ENCODE measurements at regions of chr3 and their contacts with region 1.

Region 1: GRCh38 chr3:189961525-189962161 is 159.1 kb downstream of the P3H2 start:
- DNase-seq: peak; percentile 40 to 85 (median 78)
- H3K4me3 ChIP-seq: peak overlapping the region in 1 of 59 donors; percentile 6
- H3K27ac ChIP-seq: peak overlapping the region in 49 of 59 donors; percentile 0 to 90 (median 68)
- H3K27me3 ChIP-seq: no peaks in the 10 kb centered on the region
- CTCF ChIP-seq: peak; percentile 86 to 99 (median 96)

Region 2: DNA sequence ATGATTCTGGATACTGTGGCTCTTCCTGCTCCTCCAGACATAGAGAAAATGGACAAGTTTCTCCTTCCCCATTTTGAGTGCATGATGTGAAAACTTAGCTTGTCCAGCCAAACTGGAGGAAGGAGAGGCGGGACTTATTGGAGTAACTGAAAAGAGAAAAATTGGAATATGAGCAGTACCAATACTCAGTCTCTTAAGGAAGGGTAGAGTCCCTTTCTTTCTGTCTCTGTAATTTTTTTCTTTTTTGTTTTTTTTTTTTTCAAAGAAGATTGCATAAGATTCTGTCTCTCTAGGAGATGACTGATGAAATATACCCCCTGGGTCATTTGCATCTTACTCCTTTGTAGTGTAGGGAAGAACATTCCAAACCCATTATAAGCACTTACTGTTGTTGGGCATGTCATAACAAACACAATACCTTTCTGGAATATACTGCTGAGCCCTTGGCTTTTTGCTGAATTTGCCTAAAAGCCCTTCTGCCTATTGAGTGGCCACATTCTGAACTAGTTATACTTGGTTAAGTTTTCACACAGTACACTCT is 1287.9 kb before region 1 on chr3:
- intact Hi-C with region 1: no loop called
- DNase-seq: no peak
- H3K4me3 ChIP-seq: no peak overlapping the region
- H3K27ac ChIP-seq: no peak overlapping the region
- H3K27me3 ChIP-seq: no peaks in the 10 kb centered on the region
- CTCF ChIP-seq: no peak

Region 3: DNA sequence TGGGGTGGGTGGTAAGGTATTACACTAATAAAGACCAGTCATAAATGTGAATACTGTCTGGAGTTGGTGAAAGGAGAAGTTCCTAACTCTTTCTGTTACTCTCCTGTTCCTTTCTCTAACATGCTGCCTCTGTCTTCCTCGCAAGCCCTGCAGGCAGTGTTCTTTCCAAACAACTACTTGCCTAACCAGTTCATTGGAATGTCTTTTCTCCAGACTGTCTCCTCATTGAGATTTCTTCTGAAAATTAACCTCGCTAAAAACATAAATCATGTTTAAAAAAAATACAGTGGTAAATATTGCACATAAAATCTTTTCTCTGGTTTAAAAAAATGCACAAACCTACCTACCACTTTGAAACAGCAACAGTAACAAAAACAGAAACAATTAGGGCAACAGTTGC is 195.2 kb before region 1 on chr3:
- intact Hi-C with region 1: no loop called
- DNase-seq: no peak
- H3K4me3 ChIP-seq: no peak overlapping the region
- H3K27ac ChIP-seq: no peak overlapping the region
- H3K27me3 ChIP-seq: peaks cover 0 to 4% (median 0%) of the 10 kb centered on the region in 45 donors
- CTCF ChIP-seq: no peak

Region 4: GRCh38 chr3:190076601-190077396 is 115.2 kb after region 1 on chr3:
- intact Hi-C with region 1: loop called (anchors 5 to 10 kb)
- DNase-seq: no peak
- H3K4me3 ChIP-seq: no peak overlapping the region
- H3K27ac ChIP-seq: peak overlapping the region in 3 of 59 donors; percentile 1 to 6 (median 4)
- H3K27me3 ChIP-seq: no peaks in the 10 kb centered on the region
- CTCF ChIP-seq: no peak

Region 5: DNA sequence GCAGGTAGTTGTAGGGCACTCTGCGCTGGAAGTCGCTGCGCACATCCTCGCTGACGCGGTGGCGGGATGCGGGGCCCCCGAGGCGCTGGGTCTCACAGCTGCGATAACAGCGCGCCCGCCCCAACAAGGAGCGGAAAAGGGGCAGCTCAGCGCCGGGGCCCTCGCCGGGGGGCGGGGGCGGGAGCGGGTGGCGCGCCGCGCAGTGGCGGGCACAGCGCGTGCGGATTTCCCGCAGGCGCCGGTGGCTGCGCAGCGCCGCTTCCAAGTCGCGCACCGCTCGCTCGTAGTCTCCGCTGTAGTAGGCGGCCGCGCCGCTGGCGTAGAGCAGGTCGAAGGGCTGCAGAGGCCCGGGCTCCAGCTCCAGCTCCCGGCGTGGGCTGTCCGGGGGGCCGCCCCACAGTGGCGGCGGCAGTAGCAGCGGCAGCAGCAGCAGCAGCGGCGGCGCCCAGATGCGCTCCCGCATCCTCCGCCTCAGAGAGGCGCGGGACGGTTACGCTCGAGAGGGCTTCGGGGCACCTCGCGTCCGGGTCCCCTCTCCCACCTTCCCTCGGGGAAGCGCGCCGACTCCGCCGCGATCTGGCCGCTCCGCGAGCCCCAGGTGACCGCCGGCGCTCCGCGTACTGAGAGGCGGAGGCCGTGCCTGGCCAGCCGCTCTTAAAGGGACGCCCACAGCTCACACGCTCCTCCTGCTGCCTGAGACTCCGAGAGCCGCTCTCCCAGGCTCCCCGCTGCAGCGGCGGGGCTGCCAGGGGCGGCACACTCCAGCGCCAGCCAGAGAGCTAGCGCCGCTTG is 158.8 kb after region 1 on chr3 and contains the start of gene P3H2:
- intact Hi-C with region 1: loop called (anchors 2 to 5 kb)
- DNase-seq: peak; percentile 14 to 88 (median 77)
- H3K4me3 ChIP-seq: peak within 1 kb of the TSS; percentile 51 to 92 (median 79)
- H3K27ac ChIP-seq: peak within 1 kb of the TSS in 57 of 59 donors; percentile 17 to 93 (median 81)
- H3K27me3 ChIP-seq: no peaks in the 10 kb centered on the region
- CTCF ChIP-seq: peak in 51 of 56 donors; percentile 20 to 70 (median 48)
- total RNA-seq, gene P3H2: 2.9 to 14.9 (median 8.8) TPM

Region 6: GRCh38 chr3:190205739-190206138 is 244.1 kb after region 1 on chr3:
- intact Hi-C with region 1: loop called in 1 of 2 experiments (anchors 5 kb)
- DNase-seq: no peak
- H3K4me3 ChIP-seq: no peak overlapping the region
- H3K27ac ChIP-seq: no peak overlapping the region
- H3K27me3 ChIP-seq: no peaks in the 10 kb centered on the region
- CTCF ChIP-seq: no peak

Region 7: DNA sequence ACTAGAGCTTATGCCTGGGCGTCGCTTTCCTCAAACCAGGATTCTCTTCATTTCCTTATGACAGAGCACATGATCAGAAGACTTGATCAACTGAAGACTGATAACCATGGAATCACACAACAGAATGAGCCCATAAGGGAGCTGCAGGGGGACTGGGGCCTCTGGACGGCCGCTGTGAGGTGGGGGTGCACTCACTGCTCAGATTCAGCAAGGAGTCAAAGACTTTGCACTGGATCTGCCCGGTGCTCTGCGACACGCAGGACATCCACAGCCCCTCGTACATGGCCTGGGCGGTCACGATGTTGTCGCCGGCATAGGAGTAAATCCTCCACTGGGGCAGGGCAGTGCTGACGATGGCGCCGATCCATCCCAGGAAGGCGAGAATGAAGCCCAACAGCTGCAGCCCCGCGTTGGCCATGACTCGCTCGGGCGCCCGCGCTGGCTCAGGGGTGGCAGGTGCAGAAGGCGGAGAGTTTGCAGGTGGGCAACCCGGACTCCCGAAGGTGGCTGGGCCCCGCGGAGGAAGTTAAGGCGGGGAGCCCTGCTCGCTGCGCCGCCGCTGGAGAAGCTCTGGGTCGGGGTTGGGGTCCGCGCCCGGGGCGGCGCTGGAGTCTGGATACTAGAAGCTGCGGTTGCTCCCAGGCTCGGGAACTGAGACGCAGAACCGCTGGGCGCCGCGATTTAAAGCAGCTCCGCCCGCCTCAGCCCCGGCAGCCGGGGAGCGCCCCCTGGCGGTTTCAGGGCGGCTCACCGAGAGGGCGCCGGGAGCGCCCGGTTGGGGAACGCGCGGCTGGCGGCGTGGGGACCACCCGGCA is 360.4 kb after region 1 on chr3 and contains the start of gene CLDN1:
- intact Hi-C with region 1: loop called (anchors 5 to 10 kb)
- DNase-seq: peak; percentile 18 to 87 (median 68)
- H3K4me3 ChIP-seq: peak within 1 kb of the TSS; percentile 44 to 83 (median 69)
- H3K27ac ChIP-seq: peak within 1 kb of the TSS in 3 of 59 donors; percentile 54 to 71 (median 55)
- H3K27me3 ChIP-seq: peaks cover 0 to 6% (median 0%) of the 10 kb centered on the region in 45 donors
- CTCF ChIP-seq: peak; percentile 76 to 99 (median 94)
- total RNA-seq, gene CLDN1: 0.28 to 3.3 (median 0.90) TPM in 118 of 120 experiments, not detected in the others

Measured in dorsolateral prefrontal cortex (tissue), 120 donors.